Breast epithelium (tissue), 4 donors: ENCODE measurements at regions of chr3 and their contacts with region 1.

Region 1: GRCh38 chr3:73563896-73564582 is 60.7 kb downstream of the PDZRN3 start:
- DNase-seq: no peak
- H3K4me3 ChIP-seq: no peak overlapping the region
- H3K27ac ChIP-seq: peak overlapping the region in 1 of 2 donors; percentile 5
- H3K4me1 ChIP-seq: no peaks in the 10 kb centered on the region
- H3K27me3 ChIP-seq: no peaks in the 10 kb centered on the region
- CTCF ChIP-seq: no peak
- POLR2A ChIP-seq: no peak

Region 2: DNA sequence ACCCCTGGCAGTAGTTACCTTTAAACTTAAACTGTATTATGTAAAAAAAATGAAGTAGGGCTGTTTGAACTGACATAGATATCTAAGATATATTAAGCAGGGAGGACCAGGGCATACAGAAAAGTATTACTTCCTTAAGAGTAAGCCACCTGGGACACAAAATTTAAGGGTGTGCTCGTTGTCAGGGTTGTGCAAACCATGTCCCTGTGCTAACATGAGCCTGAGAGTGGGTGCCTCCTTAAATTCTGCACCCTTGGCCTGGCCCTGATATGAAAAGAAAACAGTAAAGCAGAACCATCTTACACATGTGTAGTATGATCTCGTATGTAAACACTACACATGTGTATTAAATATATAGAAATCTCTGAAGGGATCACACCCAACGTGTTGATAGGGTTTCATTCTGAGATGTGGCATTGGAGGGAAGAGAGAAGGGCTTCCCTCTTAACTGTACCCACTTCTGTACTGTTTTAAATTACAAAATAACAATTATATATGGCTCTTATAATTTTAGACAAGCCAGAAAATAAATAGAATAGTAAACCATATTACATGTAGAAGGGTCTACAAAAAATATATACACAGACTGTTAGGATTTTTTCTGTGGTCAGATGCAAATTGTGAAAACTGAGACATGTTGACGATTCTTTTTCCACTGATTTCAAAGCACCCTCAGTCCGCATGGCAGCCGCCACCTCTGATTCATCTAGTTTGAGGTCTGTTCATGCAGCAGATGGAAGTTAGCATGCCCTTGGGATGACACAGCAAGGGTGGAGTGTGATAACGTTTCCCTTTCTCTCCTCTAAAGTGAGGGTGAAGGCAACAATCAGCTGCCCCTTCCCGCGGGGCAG is 1378.3 kb before region 1 on chr3:
- intact Hi-C with region 1: no loop called
- DNase-seq: no peak
- H3K4me3 ChIP-seq: no peak overlapping the region
- H3K27ac ChIP-seq: peak overlapping the region in 1 of 2 donors; percentile 58
- H3K4me1 ChIP-seq: no peaks in the 10 kb centered on the region
- H3K27me3 ChIP-seq: no peaks in the 10 kb centered on the region
- CTCF ChIP-seq: no peak
- POLR2A ChIP-seq: no peak

Region 3: GRCh38 chr3:73592154-73593144 is 28.4 kb after region 1 on chr3:
- intact Hi-C with region 1: no loop called
- DNase-seq: no peak
- H3K4me3 ChIP-seq: no peak overlapping the region
- H3K27ac ChIP-seq: no peak overlapping the region
- H3K4me1 ChIP-seq: no peaks in the 10 kb centered on the region
- H3K27me3 ChIP-seq: no peaks in the 10 kb centered on the region
- CTCF ChIP-seq: no peak
- POLR2A ChIP-seq: no peak

Region 4: GRCh38 chr3:73727117-73727821 is 163.2 kb after region 1 on chr3:
- intact Hi-C with region 1: no loop called
- DNase-seq: no peak
- H3K4me3 ChIP-seq: no peak overlapping the region
- H3K27ac ChIP-seq: peak overlapping the region; percentile 53 to 88
- H3K4me1 ChIP-seq: no peaks in the 10 kb centered on the region
- H3K27me3 ChIP-seq: no peaks in the 10 kb centered on the region
- CTCF ChIP-seq: no peak
- POLR2A ChIP-seq: no peak

Region 5: DNA sequence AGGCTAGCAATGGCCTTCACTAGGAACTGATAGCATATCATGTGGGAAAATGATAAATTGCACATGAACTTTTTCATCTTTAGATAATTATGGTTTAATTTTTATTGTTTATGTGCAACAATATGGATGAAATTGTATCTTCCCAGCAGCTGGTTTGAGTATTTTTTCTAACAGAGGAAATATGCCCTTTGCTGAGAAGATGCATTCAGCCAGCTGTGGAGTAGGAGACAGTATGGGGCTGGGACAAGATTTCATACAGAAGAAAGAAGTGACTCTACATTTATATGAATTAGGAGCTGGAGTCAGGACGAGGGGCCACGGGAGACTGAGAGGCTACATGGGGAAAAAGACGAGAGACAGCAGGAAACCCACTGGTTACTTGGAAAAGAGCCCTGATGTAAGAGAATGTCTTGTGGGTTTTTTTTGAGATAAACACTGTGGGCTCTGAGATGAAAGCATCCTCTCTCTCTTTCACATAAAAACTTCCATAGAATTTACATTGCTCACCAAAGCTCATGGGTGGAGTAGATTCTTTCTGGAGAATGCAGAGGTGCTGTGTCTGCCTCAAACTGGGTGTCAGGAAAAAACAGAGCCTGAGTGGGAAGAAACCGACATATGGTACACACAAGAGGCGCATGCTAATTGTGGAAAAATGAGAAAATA is 175.9 kb after region 1 on chr3:
- intact Hi-C with region 1: loop called (anchors 5 kb)
- DNase-seq: no peak
- H3K4me3 ChIP-seq: no peak overlapping the region
- H3K27ac ChIP-seq: no peak overlapping the region
- H3K4me1 ChIP-seq: no peaks in the 10 kb centered on the region
- H3K27me3 ChIP-seq: no peaks in the 10 kb centered on the region
- CTCF ChIP-seq: no peak
- POLR2A ChIP-seq: no peak